ENCODE measurements at regions of chr9 and their contacts with region 1.

Region 1: GRCh38 chr9:17531642-17532254 is 47.1 kb upstream of the SH3GL2 start:
- DNase-seq: peak; percentile 52
- H3K4me3 Mint-ChIP-seq: no peak overlapping the region
- H3K27ac Mint-ChIP-seq: no peak overlapping the region
- H3K4me1 Mint-ChIP-seq: no peaks in the 10 kb centered on the region
- H3K27me3 Mint-ChIP-seq: no peaks in the 10 kb centered on the region

Region 2: GRCh38 chr9:17578911-17579793 is 47.4 kb after region 1 on chr9 and contains the start of gene SH3GL2:
- CTCF ChIA-PET with region 1: no interaction called
- intact Hi-C with region 1: no loop called
- DNase-seq: peak; percentile 16
- H3K4me3 Mint-ChIP-seq: peak within 1 kb of the TSS; percentile 32
- H3K27ac Mint-ChIP-seq: no peak within 1 kb of the TSS
- H3K4me1 Mint-ChIP-seq: peaks cover 8% of the 10 kb centered on the region
- H3K27me3 Mint-ChIP-seq: peaks cover 31% of the 10 kb centered on the region
- total RNA-seq, gene SH3GL2: not detected

Region 3: DNA sequence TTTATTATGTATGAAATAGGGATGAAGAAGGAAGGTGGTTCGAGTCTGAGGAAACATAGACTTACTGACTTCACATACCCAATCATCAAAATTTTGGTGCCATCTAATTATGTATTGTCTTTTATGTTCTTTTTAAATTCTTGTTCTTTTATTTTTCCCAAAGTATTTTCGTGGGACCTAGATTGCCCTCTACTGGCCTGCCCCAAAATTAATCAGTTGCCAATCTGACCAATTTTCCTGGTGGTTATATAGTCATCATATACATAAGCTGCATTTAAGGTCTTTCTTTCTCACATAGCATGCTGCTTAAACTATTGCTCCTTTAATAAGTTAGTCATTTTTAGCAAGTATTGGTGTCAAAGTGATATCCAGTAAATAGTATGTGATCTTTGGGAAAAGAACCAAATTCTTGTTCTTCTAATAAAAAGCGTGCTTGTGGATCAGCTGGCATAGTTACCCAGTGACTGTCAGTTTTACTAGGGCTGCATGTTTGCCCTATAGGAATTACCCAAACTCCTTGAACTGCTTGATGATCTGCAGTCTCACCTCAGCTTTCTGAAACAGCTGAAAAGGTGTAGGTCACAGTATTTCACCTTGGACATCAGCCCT is 270.6 kb after region 1 on chr9:
- CTCF ChIA-PET with region 1: interaction called, 3 read pairs
- intact Hi-C with region 1: loop called (anchors 1 kb)
- DNase-seq: no peak
- H3K4me3 Mint-ChIP-seq: no peak overlapping the region
- H3K27ac Mint-ChIP-seq: no peak overlapping the region
- H3K4me1 Mint-ChIP-seq: no peaks in the 10 kb centered on the region
- H3K27me3 Mint-ChIP-seq: no peaks in the 10 kb centered on the region

Region 4: GRCh38 chr9:18007621-18008020 is 475.9 kb after region 1 on chr9:
- CTCF ChIA-PET with region 1: no interaction called
- intact Hi-C with region 1: no loop called
- DNase-seq: no peak
- H3K4me3 Mint-ChIP-seq: no peak overlapping the region
- H3K27ac Mint-ChIP-seq: no peak overlapping the region
- H3K4me1 Mint-ChIP-seq: no peaks in the 10 kb centered on the region
- H3K27me3 Mint-ChIP-seq: no peaks in the 10 kb centered on the region

Region 5: DNA sequence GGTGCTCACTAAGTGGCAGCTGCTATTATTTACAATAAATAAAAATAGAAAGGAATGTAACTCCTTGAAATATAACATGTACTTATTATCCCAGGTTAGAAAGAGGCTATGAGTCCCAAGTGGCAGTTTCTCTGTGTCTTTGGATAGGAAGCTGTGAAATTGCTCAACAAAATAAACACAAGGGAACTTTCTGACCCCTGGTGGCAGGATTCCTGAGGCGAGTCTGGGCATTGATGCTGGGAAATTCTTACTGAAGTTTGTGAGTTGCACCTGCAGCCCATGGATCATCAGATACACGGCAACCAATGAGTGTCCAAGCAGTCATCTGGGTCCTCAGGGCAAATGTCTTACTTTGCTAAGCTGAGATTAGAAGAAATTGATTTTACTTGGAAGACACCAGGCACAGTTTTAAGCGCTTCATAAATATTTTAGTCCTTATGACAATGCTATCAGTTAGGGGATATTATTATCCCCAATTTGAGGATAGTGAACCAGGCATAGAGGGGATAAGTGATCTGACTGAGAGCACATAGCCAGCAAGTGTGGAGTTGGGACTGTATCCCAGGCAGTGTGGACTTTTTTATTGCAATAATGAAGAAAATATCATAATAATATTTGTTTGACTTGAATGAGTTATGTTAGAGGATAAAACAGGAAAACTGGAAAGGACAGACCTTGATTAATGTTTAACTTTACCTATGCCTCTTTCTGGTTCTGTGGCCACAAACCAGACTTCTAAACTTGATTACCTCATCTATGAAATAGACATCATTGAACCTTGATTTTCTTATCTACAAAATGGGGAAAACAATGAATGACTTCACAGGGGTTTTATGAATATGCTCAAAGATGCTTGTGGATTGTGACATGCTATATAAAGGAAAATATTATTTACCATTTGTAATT is 676.7 kb after region 1 on chr9:
- CTCF ChIA-PET with region 1: interaction called, 3 read pairs
- intact Hi-C with region 1: loop called (anchors 1 kb)
- DNase-seq: no peak
- H3K4me3 Mint-ChIP-seq: no peak overlapping the region
- H3K27ac Mint-ChIP-seq: no peak overlapping the region
- H3K4me1 Mint-ChIP-seq: no peaks in the 10 kb centered on the region
- H3K27me3 Mint-ChIP-seq: peaks cover 6% of the 10 kb centered on the region

Region 6: GRCh38 chr9:19028835-19029451 is 1497.2 kb after region 1 on chr9:
- CTCF ChIA-PET with region 1: no interaction called
- intact Hi-C with region 1: loop called (anchors 5 kb)
- DNase-seq: peak; percentile 54
- H3K4me3 Mint-ChIP-seq: no peak overlapping the region
- H3K27ac Mint-ChIP-seq: no peak overlapping the region
- H3K4me1 Mint-ChIP-seq: peaks cover 7% of the 10 kb centered on the region
- H3K27me3 Mint-ChIP-seq: peaks cover 10% of the 10 kb centered on the region